Caco-2 (cell line): ENCODE measurements at regions of chr6 and their contacts with region 1.

Region 1: DNA sequence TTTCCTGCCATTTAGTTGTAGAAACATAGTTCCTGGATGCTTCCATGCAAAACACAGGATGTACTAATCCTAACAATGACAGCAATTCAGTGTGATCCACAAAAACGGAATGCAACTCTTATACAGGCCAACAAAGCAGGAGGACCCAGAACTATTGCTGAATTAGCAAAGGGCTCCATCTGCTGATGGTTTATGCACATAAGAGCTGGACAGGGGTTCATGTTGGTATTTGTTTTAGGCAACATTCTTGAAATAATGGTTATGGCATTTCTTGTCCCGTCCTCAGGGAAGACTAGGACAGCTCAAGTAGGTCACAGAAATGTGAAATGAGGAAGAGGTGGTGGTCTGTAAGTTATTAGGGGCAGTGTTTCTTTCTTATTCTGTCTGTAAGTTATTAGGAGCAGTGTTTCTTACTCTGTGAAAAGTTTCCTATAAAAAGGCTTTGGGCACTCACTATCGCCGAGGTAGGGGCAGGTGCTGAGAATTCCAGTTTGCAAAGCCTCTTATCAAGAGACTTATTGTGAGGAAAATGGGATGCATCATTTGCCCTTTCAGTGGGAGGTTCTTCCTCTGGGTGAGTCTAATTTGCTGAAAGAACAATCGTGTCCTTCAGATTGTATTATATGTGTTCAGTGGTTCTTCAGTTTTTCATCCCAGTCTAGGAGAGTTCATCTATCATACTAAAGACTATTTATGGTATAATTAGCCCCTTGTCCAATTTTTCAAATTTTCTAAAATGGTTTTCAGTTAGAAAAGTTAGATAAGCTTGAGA is 171.1 kb downstream of the MCHR2 start:
- DNase-seq: peak; percentile 48 to 61
- H3K4me3 ChIP-seq: peak overlapping the region; percentile 32
- H3K4me3 Mint-ChIP-seq: peak overlapping the region; percentile 74
- H3K27ac Mint-ChIP-seq: no peak overlapping the region
- H3K4me1 ChIP-seq: no peaks in the 10 kb centered on the region
- H3K4me1 Mint-ChIP-seq: peaks cover 7% of the 10 kb centered on the region
- H3K27me3 ChIP-seq: no peaks in the 10 kb centered on the region
- H3K27me3 Mint-ChIP-seq: peaks cover 6% of the 10 kb centered on the region
- CTCF ChIP-seq: peak; percentile 47 to 79

Region 2: DNA sequence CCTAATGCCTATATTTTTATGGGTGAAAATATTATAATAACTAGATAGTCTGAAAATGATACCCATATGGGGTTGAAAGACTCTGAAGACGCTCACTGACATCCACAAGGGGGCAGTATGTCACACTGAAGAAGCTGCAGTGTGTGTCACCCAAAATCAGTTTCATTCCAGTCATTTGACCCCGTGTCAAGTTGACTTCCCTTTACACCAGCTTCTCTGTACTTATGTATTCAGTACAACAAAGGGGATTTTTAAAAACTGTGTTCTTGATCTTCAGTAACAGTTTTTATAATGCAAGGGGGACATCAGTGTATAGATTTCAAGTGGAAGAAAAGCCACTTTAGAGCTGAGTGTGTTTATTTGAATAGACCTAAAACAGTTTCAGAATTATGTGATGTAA is 492.8 kb before region 1 on chr6:
- CTCF ChIA-PET with region 1: no interaction called
- POLR2A ChIA-PET with region 1: no interaction called
- intact Hi-C with region 1: loop called (anchors 2 kb)
- DNase-seq: peak in 1 of 2 experiments; percentile 53
- H3K4me3 ChIP-seq: no peak overlapping the region
- H3K4me3 Mint-ChIP-seq: no peak overlapping the region
- H3K27ac Mint-ChIP-seq: no peak overlapping the region
- H3K4me1 ChIP-seq: no peaks in the 10 kb centered on the region
- H3K4me1 Mint-ChIP-seq: no peaks in the 10 kb centered on the region
- H3K27me3 ChIP-seq: no peaks in the 10 kb centered on the region
- H3K27me3 Mint-ChIP-seq: no peaks in the 10 kb centered on the region
- CTCF ChIP-seq: peak; percentile 49 to 66

Region 3: DNA sequence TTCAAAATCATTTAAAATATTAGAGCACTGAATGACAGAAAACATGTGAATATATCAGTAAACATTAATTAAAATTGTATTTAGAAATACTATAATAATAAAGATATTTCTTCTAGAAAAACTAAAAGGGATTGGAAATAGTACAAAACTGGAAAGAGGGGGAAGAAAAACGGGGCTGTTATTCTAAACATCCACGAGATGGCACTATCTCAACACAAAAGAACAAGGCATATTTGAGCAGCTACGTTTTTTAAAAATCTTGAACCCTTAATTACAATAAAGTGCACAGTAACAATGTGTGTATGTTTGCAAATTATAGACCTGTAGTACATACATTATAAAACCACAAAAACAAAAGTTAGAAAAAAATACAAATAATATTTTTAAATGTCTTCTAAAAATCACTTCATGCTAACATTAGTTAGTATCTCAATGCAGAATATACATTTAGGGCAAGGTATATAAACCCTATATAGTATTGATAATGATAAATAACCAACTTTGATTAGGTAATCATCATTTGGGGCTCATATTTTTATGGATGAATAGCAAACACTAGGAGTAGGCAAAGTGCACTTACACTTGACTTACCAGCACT is 355.3 kb before region 1 on chr6:
- CTCF ChIA-PET with region 1: no interaction called
- POLR2A ChIA-PET with region 1: no interaction called
- intact Hi-C with region 1: loop called (anchors 2 kb)
- DNase-seq: no peak
- H3K4me3 ChIP-seq: no peak overlapping the region
- H3K4me3 Mint-ChIP-seq: no peak overlapping the region
- H3K27ac Mint-ChIP-seq: no peak overlapping the region
- H3K4me1 ChIP-seq: no peaks in the 10 kb centered on the region
- H3K4me1 Mint-ChIP-seq: no peaks in the 10 kb centered on the region
- H3K27me3 ChIP-seq: no peaks in the 10 kb centered on the region
- H3K27me3 Mint-ChIP-seq: no peaks in the 10 kb centered on the region
- CTCF ChIP-seq: peak; percentile 60 to 61

Region 4: DNA sequence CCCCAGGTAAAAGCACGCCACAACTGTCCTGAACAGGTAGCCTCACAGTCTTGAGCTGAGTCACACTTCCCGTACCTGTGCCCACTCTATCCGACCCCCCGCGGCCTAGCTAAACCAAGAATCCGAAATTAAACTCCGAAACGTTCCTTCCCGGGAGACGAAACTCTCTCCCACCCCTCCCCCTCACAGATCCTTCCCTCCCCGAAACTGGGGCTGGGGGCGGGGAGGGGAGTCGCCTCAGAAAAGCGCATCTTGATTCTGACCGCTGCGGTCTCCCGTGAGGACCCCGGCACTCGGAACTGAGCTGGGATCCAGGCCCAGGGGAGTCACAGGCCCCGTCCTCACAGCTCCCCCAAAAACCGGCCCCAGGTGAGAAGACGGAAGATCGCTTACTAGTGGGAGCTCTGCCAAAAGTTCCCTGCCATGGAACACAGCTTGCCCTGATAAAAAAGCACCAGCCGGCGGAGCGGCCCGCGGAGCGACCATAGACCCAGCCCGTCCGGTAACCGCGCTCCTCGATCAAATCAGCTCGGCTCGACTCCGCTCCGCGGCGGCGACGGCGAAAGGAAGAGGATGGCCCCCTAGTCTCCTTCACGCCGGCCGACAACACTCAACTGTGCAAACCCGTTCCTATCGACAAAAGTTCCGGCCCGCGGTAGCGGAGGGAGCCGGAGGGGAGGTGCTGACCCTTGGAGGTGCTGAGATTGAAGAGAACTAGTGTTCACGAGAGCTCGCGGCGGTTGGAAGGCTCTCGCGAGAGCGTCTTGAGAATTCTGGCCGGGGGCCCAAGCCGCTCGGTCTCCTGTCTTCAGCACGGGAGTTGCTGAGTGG is 254.6 kb before region 1 on chr6 and contains the start of gene CCNC:
- CTCF ChIA-PET with region 1: interaction called, 6 read pairs
- POLR2A ChIA-PET with region 1: no interaction called
- intact Hi-C with region 1: loop called (anchors 2 kb)
- DNase-seq: peak; percentile 96 to 97
- H3K4me3 ChIP-seq: peak within 1 kb of the TSS; percentile 70
- H3K4me3 Mint-ChIP-seq: peak within 1 kb of the TSS; percentile 96
- H3K27ac Mint-ChIP-seq: peak within 1 kb of the TSS; percentile 100
- H3K4me1 ChIP-seq: peaks cover 5% of the 10 kb centered on the region
- H3K4me1 Mint-ChIP-seq: peaks cover 10% of the 10 kb centered on the region
- H3K27me3 ChIP-seq: no peaks in the 10 kb centered on the region
- H3K27me3 Mint-ChIP-seq: no peaks in the 10 kb centered on the region
- CTCF ChIP-seq: no peak
- total RNA-seq, gene CCNC: 93.1 and 94.6 TPM in 2 replicates

Region 5: DNA sequence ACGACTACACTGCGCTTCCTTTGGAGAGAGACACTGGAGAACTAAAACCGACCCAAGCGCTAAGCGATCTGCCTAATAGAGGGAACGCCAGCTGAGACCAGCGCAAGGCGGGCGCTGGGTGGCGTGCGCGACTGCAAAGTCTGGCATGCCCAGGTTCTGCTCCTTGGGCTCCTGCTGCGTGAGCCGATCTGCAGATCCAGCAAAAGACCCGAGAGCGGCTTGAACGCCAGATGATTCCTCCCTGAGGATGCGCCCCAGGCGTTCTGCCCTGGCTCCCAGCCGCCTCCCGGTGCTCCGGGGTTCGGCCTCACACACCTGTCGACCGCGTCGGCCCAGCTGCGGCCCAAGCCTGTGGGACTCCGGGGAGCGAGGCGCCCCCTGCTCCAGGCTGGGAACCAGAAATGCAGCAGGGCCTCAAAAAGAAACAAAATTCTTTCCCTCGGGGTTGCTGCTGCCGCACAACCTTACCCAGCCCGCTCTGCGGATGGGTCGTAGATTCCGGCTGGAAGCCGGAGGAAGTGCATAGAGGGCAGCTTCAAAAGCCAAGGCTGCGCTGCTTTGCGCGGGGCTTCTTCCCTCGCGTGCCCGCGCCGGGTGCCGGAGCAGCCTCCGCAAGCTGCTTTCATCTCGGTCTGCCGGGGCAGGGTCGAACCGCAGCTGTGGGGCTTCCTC is 234.2 kb before region 1 on chr6:
- CTCF ChIA-PET with region 1: interaction called, 7 read pairs
- POLR2A ChIA-PET with region 1: no interaction called
- intact Hi-C with region 1: loop called (anchors 2 kb)
- DNase-seq: peak; percentile 76 to 81
- H3K4me3 ChIP-seq: peak overlapping the region; percentile 42
- H3K4me3 Mint-ChIP-seq: peak overlapping the region; percentile 84
- H3K27ac Mint-ChIP-seq: no peak overlapping the region
- H3K4me1 ChIP-seq: no peaks in the 10 kb centered on the region
- H3K4me1 Mint-ChIP-seq: no peaks in the 10 kb centered on the region
- H3K27me3 ChIP-seq: peaks cover 2% of the 10 kb centered on the region; the same call in 1 of the 2 replicates
- H3K27me3 Mint-ChIP-seq: peaks cover 23% of the 10 kb centered on the region
- CTCF ChIP-seq: peak; percentile 33 to 67

Region 6: DNA sequence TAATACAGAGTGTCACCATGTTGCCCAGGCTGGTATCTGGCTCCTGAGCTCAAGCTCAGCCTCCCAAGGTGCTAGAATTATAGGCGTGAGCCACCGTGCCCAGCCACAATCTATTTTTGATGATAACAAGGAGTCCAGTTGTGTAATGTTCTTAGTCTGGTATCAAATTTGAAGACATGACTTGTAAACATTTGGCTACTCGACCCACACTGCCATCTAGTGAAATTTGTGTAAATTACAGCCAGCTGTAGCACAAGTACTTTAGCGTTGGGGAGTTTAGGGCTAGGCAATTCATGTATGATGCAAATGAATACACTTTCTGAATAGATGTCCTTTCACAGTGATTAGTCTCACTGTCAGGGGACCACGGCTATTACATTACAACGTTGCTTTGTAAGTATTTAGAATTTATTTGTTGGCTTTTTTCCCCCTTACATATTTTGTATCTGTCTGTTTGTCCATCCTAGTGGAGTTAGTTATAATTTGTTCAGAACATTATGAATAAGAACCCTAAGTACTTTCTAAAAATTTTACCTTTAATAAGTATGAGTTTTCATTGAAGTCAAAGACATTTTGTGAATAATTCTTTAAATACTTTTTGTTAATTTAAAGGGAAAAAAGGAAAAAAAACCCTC is 76.5 kb before region 1 on chr6:
- CTCF ChIA-PET with region 1: no interaction called
- POLR2A ChIA-PET with region 1: no interaction called
- intact Hi-C with region 1: loop called (anchors 2 kb)
- DNase-seq: peak; percentile 51 to 71
- H3K4me3 ChIP-seq: no peak overlapping the region
- H3K4me3 Mint-ChIP-seq: no peak overlapping the region
- H3K27ac Mint-ChIP-seq: no peak overlapping the region
- H3K4me1 ChIP-seq: no peaks in the 10 kb centered on the region
- H3K4me1 Mint-ChIP-seq: no peaks in the 10 kb centered on the region
- H3K27me3 ChIP-seq: no peaks in the 10 kb centered on the region
- H3K27me3 Mint-ChIP-seq: peaks cover 18% of the 10 kb centered on the region
- CTCF ChIP-seq: peak; percentile 63 to 64

Region 7: GRCh38 chr6:99790679-99791078 is 32.2 kb before region 1 on chr6:
- CTCF ChIA-PET with region 1: no interaction called
- POLR2A ChIA-PET with region 1: no interaction called
- intact Hi-C with region 1: no loop called
- DNase-seq: no peak
- H3K4me3 ChIP-seq: no peak overlapping the region
- H3K4me3 Mint-ChIP-seq: no peak overlapping the region
- H3K27ac Mint-ChIP-seq: no peak overlapping the region
- H3K4me1 ChIP-seq: no peaks in the 10 kb centered on the region
- H3K4me1 Mint-ChIP-seq: no peaks in the 10 kb centered on the region
- H3K27me3 ChIP-seq: no peaks in the 10 kb centered on the region
- H3K27me3 Mint-ChIP-seq: peaks cover 34% of the 10 kb centered on the region
- CTCF ChIP-seq: peak; percentile 7 to 16

Region 8: DNA sequence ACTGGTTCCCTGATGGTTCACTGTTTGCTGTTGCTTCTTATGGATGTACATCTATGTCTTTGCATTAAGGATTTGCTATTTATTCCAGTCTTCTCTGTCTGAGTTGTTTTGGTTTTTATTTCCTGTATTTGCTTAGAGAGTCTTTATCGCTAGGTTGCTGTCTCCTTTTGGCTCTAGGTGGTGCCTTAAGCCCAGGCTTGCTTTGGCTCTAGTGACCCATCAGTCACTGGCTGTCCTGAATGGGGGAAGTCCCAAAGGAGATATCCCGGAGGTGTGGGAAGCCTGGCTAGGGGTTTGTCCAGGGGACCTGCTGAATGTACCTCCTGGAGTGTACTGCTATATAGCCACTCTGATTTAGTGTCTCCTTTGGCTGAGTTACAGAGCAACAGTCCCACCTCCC is 117.7 kb after region 1 on chr6:
- CTCF ChIA-PET with region 1: no interaction called
- POLR2A ChIA-PET with region 1: no interaction called
- intact Hi-C with region 1: no loop called
- DNase-seq: no peak
- H3K4me3 ChIP-seq: no peak overlapping the region
- H3K4me3 Mint-ChIP-seq: no peak overlapping the region
- H3K27ac Mint-ChIP-seq: no peak overlapping the region
- H3K4me1 ChIP-seq: no peaks in the 10 kb centered on the region
- H3K4me1 Mint-ChIP-seq: no peaks in the 10 kb centered on the region
- H3K27me3 ChIP-seq: no peaks in the 10 kb centered on the region
- H3K27me3 Mint-ChIP-seq: peaks cover 18% of the 10 kb centered on the region
- CTCF ChIP-seq: no peak